HepG2 (cell line): ENCODE measurements at regions of chr12 and their contacts with region 1.

Region 1: GRCh38 chr12:56474409-56474808 is 6.0 kb downstream of the SPRYD4 start:
- DNase-seq: no peak
- ATAC-seq: no peak
- H3K4me3 ChIP-seq: no peak overlapping the region
- H3K27ac ChIP-seq: no peak overlapping the region
- H3K4me1 ChIP-seq: peaks cover 26% of the 10 kb centered on the region
- H3K27me3 ChIP-seq: no peaks in the 10 kb centered on the region
- CTCF ChIP-seq: no peak
- EP300 ChIP-seq: no peak
- POLR2A ChIP-seq: no peak
- RAD21 ChIP-seq: no peak

Region 2: GRCh38 chr12:56488041-56488955 is 13.9 kb after region 1 on chr12 and contains the start of gene GLS2:
- CTCF ChIA-PET with region 1: no interaction called
- POLR2A ChIA-PET with region 1: interaction called, 10 read pairs
- in situ Hi-C with region 1: no loop called
- intact Hi-C with region 1: no loop called
- DNase-seq: peak; percentile 76
- ATAC-seq: peak; percentile 95
- H3K4me3 ChIP-seq: peak within 1 kb of the TSS; percentile 65 to 85 (median 79)
- H3K27ac ChIP-seq: no peak within 1 kb of the TSS
- H3K4me1 ChIP-seq: peaks cover 34% of the 10 kb centered on the region
- H3K27me3 ChIP-seq: no peaks in the 10 kb centered on the region
- CTCF ChIP-seq: no peak
- EP300 ChIP-seq: no peak
- POLR2A ChIP-seq: peak in 1 of 2 experiments; percentile 66; a peak in 2 of 4 replicates
- RAD21 ChIP-seq: no peak
- total RNA-seq, gene GLS2: 12.2 and 14.0 TPM in 2 replicates

Region 3: GRCh38 chr12:56862264-56862663 is 387.9 kb after region 1 on chr12:
- CTCF ChIA-PET with region 1: no interaction called
- POLR2A ChIA-PET with region 1: no interaction called
- in situ Hi-C with region 1: no loop called
- intact Hi-C with region 1: no loop called
- DNase-seq: no peak
- ATAC-seq: no peak
- H3K4me3 ChIP-seq: no peak overlapping the region
- H3K27ac ChIP-seq: no peak overlapping the region
- H3K4me1 ChIP-seq: no peaks in the 10 kb centered on the region
- H3K27me3 ChIP-seq: no peaks in the 10 kb centered on the region
- CTCF ChIP-seq: no peak
- EP300 ChIP-seq: no peak
- POLR2A ChIP-seq: no peak
- RAD21 ChIP-seq: no peak